ENCODE measurements at regions of chr3 and their contacts with region 1.

Region 1: DNA sequence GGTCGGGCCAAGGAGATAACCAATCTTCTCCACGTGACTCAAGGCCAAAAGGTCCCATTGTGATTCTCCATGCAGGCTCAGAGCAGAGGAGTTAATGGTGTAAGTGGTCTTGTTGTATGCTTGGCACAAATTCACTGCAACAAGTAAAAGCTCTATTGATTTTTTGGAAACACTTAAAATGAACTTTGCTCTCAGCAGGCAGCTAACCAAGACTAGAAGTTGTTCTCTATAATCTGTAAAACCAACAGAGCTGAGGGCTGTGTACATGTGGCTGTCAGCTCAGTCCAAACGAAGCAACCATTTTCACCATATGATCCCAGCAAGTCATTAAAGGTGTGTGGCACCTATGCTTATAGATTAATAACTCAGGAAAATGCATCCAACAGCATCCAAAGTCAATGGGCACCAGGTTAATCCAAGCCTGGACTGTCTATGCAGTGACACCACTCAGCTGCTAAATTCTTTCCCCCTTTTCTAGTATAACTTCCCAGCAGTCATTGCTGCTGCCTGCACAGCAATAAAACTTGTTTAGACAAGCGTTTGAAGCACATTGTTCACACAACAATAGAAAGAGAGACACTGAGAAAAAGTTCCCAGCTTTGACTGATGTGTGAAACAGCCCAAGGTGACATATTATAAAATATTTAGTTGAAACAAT is 603.8 kb upstream of the ADAMTS9 start:
- DNase-seq: no peak
- CTCF ChIP-seq: no peak

Region 2: DNA sequence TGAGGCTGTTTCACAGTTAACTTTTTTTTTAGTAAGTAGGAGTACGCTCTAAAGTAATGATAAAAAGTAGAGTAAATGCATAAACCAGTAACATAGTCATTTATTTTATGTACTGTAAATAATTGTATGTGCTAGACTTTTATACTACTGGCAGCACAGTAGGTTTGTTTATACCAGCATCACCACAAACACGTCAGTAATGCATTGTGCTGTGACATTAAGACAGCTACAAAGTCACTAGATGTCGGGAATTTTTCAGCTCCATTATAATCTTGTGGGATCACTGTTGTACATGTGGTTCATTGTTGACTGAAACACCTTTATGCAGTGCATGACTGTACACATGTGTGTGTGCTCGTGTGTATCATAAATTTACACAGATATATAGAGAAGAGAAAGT is 14.3 kb after region 1 on chr3:
- CTCF ChIA-PET with region 1: interaction called, 10 read pairs
- POLR2A ChIA-PET with region 1: no interaction called
- DNase-seq: no peak
- CTCF ChIP-seq: no peak

Region 3: DNA sequence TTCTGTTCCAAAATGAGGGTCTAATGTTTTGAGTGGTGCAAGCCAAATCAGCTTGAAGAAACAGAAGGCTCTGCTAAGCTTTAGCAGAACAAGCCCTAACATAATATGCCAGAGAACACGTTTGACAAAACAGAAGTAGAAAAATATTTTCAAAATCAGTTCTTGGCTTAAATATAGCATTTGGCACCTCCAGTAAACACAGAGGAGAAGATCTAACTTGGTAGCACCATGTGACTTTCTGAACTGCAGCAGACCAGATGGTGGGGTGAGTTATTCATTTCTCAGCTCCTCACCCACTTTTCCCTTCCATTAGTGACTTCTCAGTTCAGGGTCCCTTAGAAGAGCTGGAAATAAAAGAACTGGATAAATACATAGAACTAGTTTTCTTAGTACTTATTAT is 351.3 kb after region 1 on chr3:
- CTCF ChIA-PET with region 1: no interaction called
- POLR2A ChIA-PET with region 1: no interaction called
- DNase-seq: no peak
- CTCF ChIP-seq: no peak

Region 4: DNA sequence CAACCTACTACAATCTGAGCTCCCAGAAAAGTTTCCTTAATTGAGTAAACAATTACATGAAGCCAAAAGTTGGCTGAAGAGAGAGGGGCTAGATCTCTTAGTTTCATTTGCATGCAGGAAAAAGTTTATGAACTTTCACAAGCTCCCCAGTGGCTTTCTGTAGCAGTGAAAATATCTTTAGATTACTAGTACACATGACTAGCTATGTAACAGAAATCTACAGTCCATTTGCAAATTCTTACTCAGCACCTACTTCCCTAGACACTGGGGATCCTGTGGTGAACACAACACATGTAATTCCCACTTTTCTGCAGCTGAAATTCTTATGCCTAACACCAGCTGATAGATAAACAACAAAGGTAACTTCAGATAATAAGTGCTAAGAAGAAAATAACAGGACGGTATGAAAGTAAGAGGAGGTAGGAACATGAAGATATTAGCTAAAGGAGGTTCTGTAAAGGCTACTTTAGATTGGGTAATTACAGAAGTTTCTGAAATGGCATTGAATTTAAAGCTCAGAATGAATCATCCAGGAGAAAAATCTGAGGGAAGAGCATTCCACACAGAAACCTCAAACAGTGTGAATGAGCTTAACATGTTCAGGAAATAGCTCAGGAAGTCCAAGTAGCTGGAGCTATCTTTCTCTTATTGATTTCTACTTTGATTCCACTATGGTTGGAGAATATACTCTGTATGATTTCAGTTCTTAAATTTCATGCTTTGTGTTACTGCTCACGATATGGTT is 542.4 kb after region 1 on chr3:
- CTCF ChIA-PET with region 1: no interaction called
- POLR2A ChIA-PET with region 1: no interaction called
- DNase-seq: no peak
- CTCF ChIP-seq: no peak

Measured in GM10248 (cell line).